PC-9 (cell line): ENCODE measurements at regions of chr4 and their contacts with region 1.

Region 1: DNA sequence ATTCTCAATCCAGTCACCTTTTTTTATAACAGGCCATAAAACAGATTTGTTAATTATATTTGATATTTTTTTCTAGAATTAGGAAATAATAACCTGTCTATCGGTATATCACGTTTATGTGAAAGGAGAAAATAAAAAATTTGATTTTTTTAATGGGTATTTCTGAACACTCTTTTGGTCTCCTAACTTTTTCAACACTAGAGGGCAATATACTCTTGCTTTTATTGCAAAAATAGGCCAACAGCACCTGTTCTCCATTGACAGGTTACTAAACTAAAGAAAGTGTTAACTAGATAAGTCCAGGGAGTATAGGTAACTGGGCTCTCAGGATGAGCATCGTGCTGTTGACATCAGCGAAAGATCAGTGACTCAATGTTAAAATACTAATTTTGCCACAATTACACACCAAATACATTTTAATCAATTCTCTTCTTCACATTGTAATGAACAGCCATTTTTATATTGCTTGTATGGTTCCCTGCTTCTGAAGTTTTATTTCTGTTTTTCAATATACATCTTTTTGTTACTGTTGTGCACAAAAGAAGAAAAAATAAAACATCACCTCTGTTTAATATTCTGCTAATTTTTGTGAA is 22.8 kb downstream of the NDST4 start:
- DNase-seq: no peak
- H3K4me3 ChIP-seq: no peak overlapping the region
- H3K27ac ChIP-seq: no peak overlapping the region
- H3K4me1 ChIP-seq: no peaks in the 10 kb centered on the region
- H3K27me3 ChIP-seq: no peaks in the 10 kb centered on the region
- CTCF ChIP-seq: peak; percentile 71

Region 2: DNA sequence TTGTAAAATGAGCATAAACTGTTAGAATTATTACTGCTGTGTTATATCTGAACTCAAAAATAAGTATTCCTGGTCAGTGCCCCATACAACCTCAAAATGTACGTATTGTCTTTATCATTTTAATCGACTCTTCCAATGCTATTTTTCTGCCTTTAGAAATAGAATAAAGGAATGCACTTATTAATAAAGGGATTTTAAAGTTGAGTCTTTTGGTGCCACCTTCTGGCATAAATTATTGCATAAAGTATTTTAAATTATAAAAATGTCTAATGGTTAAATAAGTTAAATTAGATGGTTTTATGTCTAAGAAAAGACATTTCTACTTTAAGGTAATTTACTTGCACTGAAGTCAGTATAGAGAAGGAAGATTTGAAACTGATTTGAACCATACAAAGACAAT is 446.8 kb after region 1 on chr4:
- CTCF ChIA-PET with region 1: no interaction called
- POLR2A ChIA-PET with region 1: no interaction called
- intact Hi-C with region 1: loop called (anchors 5 kb)
- DNase-seq: no peak
- H3K4me3 ChIP-seq: no peak overlapping the region
- H3K27ac ChIP-seq: no peak overlapping the region
- H3K4me1 ChIP-seq: no peaks in the 10 kb centered on the region
- H3K27me3 ChIP-seq: no peaks in the 10 kb centered on the region
- CTCF ChIP-seq: peak; percentile 38

Region 3: GRCh38 chr4:115851918-115852766 is 761.6 kb after region 1 on chr4:
- CTCF ChIA-PET with region 1: no interaction called
- POLR2A ChIA-PET with region 1: no interaction called
- intact Hi-C with region 1: loop called (anchors 5 kb)
- DNase-seq: peak in 1 of 2 experiments; percentile 15
- H3K4me3 ChIP-seq: no peak overlapping the region
- H3K27ac ChIP-seq: no peak overlapping the region
- H3K4me1 ChIP-seq: no peaks in the 10 kb centered on the region
- H3K27me3 ChIP-seq: no peaks in the 10 kb centered on the region
- CTCF ChIP-seq: peak; percentile 66